SK-N-SH (cell line): ENCODE measurements at regions of chr12 and their contacts with region 1.

Region 1: DNA sequence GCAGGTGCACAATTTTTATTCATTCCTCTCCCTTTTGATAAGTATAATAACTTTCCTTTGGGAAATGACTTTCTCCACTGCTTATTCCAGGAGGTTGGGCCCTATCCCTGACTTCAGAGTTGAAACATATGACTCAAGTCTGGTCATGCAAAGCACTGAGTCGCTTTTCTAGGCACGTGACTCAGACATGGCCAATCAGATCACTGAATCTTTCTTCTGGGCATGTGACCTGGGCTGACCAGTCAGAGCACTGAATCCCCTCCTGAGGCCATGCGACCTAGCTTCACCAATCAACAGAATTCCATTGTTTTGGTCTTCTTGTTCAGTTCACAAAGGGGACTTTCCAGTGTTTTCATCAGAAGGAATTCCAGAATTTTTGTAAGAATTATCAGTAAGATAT is 377.1 kb upstream of the KITLG start:
- DNase-seq: no peak
- H3K4me3 ChIP-seq: no peak overlapping the region
- H3K27ac ChIP-seq: no peak overlapping the region
- H3K4me1 ChIP-seq: peaks cover 0 to under 1% of the 10 kb centered on the region in 2 experiments; a peak in 1 of 4 replicates
- H3K27me3 ChIP-seq: no peaks in the 10 kb centered on the region
- CTCF ChIP-seq: no peak
- EP300 ChIP-seq: no peak
- RAD21 ChIP-seq: no peak

Region 2: DNA sequence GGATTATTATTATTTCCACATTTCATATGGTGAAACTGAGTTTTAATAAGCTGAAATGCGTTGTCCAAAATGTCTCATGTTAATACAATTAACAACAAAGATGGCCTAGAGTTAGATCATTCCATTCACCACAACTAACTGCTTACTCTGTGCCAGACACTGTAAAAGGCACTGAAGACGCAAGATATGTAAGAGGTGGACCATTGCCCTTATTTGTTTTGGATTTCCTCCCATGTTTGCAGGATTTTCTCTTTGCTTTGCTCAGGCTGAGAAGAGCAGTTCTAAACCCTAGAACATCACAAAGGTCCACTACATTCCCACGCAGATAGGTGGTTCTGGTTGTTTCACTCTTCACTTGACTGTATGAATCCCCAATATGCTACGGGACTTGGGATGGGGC is 52.7 kb before region 1 on chr12:
- CTCF ChIA-PET with region 1: no interaction called
- POLR2A ChIA-PET with region 1: no interaction called
- DNase-seq: no peak
- H3K4me3 ChIP-seq: no peak overlapping the region
- H3K27ac ChIP-seq: no peak overlapping the region
- H3K4me1 ChIP-seq: no peaks in the 10 kb centered on the region
- H3K27me3 ChIP-seq: no peaks in the 10 kb centered on the region
- CTCF ChIP-seq: no peak
- EP300 ChIP-seq: no peak
- RAD21 ChIP-seq: no peak

Region 3: DNA sequence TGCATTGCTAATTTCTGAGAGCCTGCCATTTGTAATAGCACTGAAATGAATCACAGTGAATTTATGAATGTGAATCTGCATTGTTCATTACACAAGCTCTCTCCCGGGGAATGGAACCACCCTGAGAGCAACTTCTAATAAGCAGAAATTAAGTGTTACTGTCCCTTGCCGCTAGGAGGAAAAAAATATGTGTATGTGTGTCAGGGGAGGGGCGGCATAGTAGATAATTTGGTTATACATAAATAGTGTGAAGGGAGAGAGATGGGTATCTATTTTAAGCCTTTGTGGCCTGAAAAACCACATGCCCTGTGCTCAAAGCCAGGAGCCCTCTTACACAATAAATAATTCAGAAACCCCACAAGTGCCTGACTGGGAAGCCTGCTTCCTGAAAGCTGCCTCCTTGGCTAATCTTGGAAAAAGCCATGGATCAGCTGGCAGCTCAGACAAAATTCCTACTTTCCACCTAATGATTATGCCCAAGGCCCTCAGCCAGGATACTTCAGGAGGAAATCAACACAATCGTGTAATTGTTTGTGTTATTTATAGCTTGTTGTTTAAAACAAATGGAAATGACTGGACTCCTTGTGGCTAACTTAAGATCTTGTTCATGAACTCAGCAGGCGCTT is 10.9 kb before region 1 on chr12:
- CTCF ChIA-PET with region 1: interaction called, 14 read pairs
- POLR2A ChIA-PET with region 1: no interaction called
- DNase-seq: no peak
- H3K4me3 ChIP-seq: no peak overlapping the region
- H3K27ac ChIP-seq: peak overlapping the region in 1 of 2 experiments; percentile 30; a peak in 2 of 4 replicates
- H3K4me1 ChIP-seq: peaks cover 3 to 5% of the 10 kb centered on the region in 2 experiments; a peak in 3 of 4 replicates
- H3K27me3 ChIP-seq: no peaks in the 10 kb centered on the region
- CTCF ChIP-seq: peak; percentile 19; the same call in 1 of the 2 replicates
- EP300 ChIP-seq: no peak
- RAD21 ChIP-seq: no peak

Region 4: DNA sequence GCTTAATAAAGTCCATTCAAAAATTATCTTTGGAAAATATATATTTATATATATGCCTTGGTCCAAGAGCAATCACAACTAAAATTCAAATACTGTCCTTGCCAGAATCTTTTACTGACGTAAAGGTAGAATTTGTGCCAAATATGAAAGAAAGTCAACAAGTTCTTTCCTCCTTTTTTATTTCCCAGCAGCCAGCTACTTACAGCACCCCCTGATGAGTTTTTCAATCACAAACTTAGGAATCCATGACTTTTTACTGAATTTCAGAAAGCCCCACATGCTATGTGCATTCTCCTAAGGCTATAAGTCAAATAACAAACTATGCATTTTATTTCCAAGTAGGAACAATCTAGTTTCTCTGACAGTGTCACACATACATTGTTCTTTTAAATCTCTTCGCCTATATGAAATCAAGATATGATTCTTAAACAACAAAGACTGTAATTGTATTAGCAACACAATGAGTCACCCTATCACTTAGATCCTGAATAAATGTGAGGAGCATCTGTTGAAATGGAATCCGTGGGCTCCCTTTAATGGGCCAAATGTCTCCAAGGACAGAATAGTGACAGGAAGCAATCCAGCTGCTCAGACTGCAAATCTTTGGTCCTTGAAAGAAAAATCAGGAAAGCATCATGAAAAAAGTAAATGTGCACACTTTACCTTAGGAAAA is 123.6 kb after region 1 on chr12:
- CTCF ChIA-PET with region 1: no interaction called
- POLR2A ChIA-PET with region 1: no interaction called
- DNase-seq: no peak
- H3K4me3 ChIP-seq: no peak overlapping the region
- H3K27ac ChIP-seq: no peak overlapping the region
- H3K4me1 ChIP-seq: peaks cover 3 to 17% of the 10 kb centered on the region in 2 experiments; a peak in 3 of 4 replicates
- H3K27me3 ChIP-seq: no peaks in the 10 kb centered on the region
- CTCF ChIP-seq: no peak
- EP300 ChIP-seq: 0 out of 4 replicates have a peak, but pooled peaks of 1 of the 2 experiments have one; percentile 10
- RAD21 ChIP-seq: no peak